Activated CD4-positive, alpha-beta T cell treated with anti-CD3 and anti-CD28 coated beads for 36 hours (primary cell): ENCODE measurements at regions of chr2 and their contacts with region 1.

Region 1: GRCh38 chr2:111930875-111931274 is 32.5 kb downstream of the MERTK start:
- DNase-seq: peak; percentile 50
- ATAC-seq: peak; percentile 95
- H3K4me3 Mint-ChIP-seq: no peak overlapping the region
- H3K27ac Mint-ChIP-seq: peak overlapping the region; percentile 86
- H3K4me1 Mint-ChIP-seq: peaks cover 15% of the 10 kb centered on the region
- H3K27me3 Mint-ChIP-seq: peaks cover 9% of the 10 kb centered on the region

Region 2: GRCh38 chr2:111897924-111898702 is 32.8 kb before region 1 on chr2 and contains the start of gene MERTK:
- CTCF ChIA-PET with region 1: interaction called, 4 read pairs
- POLR2A ChIA-PET with region 1: no interaction called
- intact Hi-C with region 1: loop called in 1 of 2 experiments (anchors 2 kb)
- DNase-seq: peak; percentile 83
- ATAC-seq: peak; percentile 96
- H3K4me3 Mint-ChIP-seq: peak within 1 kb of the TSS; percentile 73
- H3K27ac Mint-ChIP-seq: no peak within 1 kb of the TSS
- H3K4me1 Mint-ChIP-seq: peaks cover 7% of the 10 kb centered on the region
- H3K27me3 Mint-ChIP-seq: peaks cover 15% of the 10 kb centered on the region
- total RNA-seq, gene MERTK: 0.94 to 1.4 TPM

Region 3: GRCh38 chr2:111952871-111953452 is 22.1 kb after region 1 on chr2:
- CTCF ChIA-PET with region 1: interaction called, 3 read pairs
- POLR2A ChIA-PET with region 1: no interaction called
- intact Hi-C with region 1: loop called in 1 of 2 experiments (anchors 1 kb)
- DNase-seq: no peak
- ATAC-seq: peak; percentile 71
- H3K4me3 Mint-ChIP-seq: no peak overlapping the region
- H3K27ac Mint-ChIP-seq: no peak overlapping the region
- H3K4me1 Mint-ChIP-seq: peaks cover 4% of the 10 kb centered on the region
- H3K27me3 Mint-ChIP-seq: peaks cover 5% of the 10 kb centered on the region